ENCODE measurements at regions of chr1 and their contacts with region 1.

Region 1: GRCh38 chr1:177948336-177948972 is 21.4 kb downstream of the SEC16B start:
- DNase-seq: no peak

Region 2: GRCh38 chr1:177907000-177907399 is 41.5 kb before region 1 on chr1:
- intact Hi-C with region 1: no loop called
- DNase-seq: no peak

Region 3: DNA sequence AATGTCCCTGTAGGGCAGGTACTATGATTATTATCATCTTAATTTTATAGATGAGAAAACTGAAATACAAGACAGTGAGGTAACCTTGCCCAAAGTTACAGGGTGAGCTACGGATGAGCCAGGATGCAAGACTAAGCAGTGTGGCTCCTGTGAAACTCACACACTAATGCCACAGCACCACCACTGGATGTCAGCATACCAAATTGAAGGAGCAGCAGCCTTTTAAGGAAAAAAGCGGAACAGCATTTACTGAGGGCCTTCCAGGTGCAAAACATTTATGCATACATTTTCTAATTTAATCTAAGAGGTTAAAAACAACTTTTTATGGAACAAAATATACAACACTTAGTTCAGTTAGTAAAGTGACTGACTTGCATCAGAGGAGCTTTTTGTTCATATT is 20.3 kb before region 1 on chr1:
- intact Hi-C with region 1: no loop called
- DNase-seq: no peak

Region 4: GRCh38 chr1:178282949-178283367 is 334.5 kb after region 1 on chr1:
- intact Hi-C with region 1: loop called (anchors 10 kb)
- DNase-seq: no peak

Measured in cardiac septum (tissue), 1 donor.